ENCODE measurements at regions of chr15 and their contacts with region 1.

Region 1: GRCh38 chr15:41230650-41231533 is at the starts of genes CHP1 and EXD1:
- DNase-seq: peak; percentile 97
- H3K4me3 ChIP-seq: peak within 1 kb of the TSS; percentile 93 to 98 (median 93)
- H3K27ac ChIP-seq: peak within 1 kb of the TSS; percentile 89
- H3K4me1 ChIP-seq: peaks cover 25% of the 10 kb centered on the region
- H3K27me3 ChIP-seq: no peaks in the 10 kb centered on the region
- CTCF ChIP-seq: peak; percentile 82 to 93
- total RNA-seq, gene CHP1: 132 to 138 TPM
- total RNA-seq, gene EXD1: not detected

Region 2: DNA sequence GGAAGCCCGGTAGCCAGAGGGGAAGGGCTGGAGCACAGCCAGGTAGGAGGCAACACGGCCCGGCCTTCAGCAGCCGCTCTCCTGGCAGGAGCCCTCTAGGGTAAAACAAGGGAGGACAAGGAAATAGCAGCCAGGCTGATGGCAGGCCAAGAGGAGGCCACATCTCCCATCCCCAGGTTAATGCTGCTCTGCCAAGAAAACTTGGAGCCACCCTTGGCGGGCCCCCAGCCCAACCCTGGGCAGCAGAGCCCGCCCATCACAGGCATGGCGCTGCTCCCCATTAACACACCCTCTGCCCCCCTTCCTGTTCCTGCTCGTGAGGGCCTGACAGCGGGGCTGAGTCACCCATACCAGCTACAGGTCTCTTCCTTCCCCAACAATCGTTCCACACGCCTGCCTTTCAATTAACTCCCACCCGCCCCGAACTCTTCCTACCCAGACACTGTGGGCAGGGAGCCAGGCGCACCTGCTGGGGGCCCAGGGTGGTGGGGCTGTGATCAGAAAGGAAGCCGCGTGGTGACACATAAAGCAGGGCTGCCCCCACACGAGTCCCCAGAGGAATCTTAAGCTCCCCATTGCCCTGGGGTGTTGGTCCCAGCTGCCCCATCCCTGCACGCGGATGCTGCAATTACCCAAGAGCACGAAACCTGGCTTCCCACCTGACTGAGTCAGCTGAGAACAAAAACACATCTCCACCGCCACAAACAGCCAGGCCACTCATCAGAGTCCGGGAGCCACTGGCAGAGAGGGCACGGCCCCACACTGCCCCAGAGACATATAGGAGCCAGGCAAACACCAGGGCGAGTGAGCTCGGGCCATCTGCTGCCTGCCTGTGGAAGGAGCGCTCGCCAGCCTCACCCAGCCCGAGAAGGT is 461.4 kb before region 1 on chr15 and contains the start of gene C15orf62:
- CTCF ChIA-PET with region 1: no interaction called
- dilution Hi-C with region 1: no loop called
- in situ Hi-C with region 1: no loop called
- intact Hi-C with region 1: no loop called
- DNase-seq: peak; percentile 94
- H3K4me3 ChIP-seq: peak within 1 kb of the TSS in 1 of 3 experiments; percentile 34
- H3K27ac ChIP-seq: peak within 1 kb of the TSS; percentile 68
- H3K4me1 ChIP-seq: peaks cover 41% of the 10 kb centered on the region
- H3K27me3 ChIP-seq: no peaks in the 10 kb centered on the region
- CTCF ChIP-seq: no peak
- total RNA-seq, gene C15orf62: 0.21 TPM in 1 of 2 donors, not detected in the other

Region 3: DNA sequence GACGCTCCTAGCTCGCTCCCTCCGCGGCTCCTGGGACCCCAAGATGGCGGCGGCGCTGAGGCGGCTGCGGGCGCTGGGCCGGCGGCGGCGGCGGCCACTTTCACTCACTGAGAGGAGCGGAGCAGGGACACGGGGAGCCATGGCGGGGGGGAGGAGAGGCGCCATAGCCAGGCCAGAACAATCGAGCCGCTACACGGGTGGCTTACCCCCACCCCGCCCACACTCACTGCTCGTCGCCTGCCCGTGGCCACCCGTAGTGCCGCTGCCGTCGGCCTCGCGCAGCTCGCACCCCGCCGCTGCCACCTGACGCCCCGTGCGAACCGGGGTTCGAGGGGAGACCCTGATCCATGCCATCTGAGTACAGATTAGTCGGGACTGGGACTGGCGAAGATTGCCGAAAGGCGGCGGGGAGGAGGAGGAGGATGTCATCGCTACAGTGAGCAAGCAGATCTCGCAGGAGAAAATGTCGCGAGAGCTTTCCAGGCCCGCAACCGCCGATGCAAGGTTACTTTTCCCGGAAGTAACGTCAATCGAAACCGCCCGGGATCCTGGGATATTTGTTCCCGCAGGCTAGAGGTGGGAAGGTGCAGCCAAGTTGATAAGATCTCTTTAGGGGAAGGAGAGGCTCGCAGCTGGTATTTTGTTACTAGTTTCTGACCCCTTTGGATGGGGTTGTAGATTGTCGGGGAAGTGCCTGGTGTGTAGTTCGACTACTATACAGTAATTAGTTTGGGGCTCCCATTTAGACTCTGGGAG is 114.6 kb before region 1 on chr15 and contains the start of gene INO80:
- CTCF ChIA-PET with region 1: no interaction called
- dilution Hi-C with region 1: no loop called
- in situ Hi-C with region 1: no loop called
- intact Hi-C with region 1: loop called (anchors 5 kb)
- DNase-seq: peak; percentile 98
- H3K4me3 ChIP-seq: peak within 1 kb of the TSS; percentile 84 to 92 (median 89)
- H3K27ac ChIP-seq: peak within 1 kb of the TSS; percentile 100
- H3K4me1 ChIP-seq: peaks cover 9% of the 10 kb centered on the region
- H3K27me3 ChIP-seq: no peaks in the 10 kb centered on the region
- CTCF ChIP-seq: no peak
- total RNA-seq, gene INO80: 14.0 to 28.0 TPM

Region 4: DNA sequence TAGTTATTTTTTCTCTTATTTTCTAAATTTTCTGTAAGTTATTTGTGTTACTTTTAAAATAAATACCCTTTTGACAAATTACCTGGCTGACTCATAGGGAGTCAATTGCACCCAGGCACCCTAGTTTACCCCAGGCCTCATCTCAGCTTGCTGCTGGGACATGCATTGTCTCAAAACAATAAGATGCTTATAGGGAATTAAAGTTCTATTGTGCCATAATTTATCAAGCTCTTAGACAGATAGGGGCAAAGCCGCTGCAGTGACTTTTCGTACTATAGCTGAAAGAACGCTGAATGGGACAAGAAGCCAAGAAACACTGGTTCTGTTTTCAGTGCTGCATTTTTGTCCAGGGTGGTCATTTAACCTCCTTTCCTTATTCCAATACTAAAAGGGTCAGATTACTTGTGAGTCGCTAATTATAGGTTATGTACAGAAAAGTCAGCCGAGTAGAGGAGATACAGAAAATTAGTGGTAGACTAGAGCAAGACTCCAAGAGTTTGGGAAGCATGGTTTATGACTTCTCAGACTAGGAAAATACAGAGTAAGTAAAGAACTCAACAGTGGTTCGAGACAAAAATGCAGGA is 50.6 kb before region 1 on chr15:
- CTCF ChIA-PET with region 1: no interaction called
- dilution Hi-C with region 1: no loop called
- in situ Hi-C with region 1: no loop called
- intact Hi-C with region 1: no loop called
- DNase-seq: no peak
- H3K4me3 ChIP-seq: no peak overlapping the region
- H3K27ac ChIP-seq: no peak overlapping the region
- H3K4me1 ChIP-seq: no peaks in the 10 kb centered on the region
- H3K27me3 ChIP-seq: no peaks in the 10 kb centered on the region
- CTCF ChIP-seq: no peak

Region 5: DNA sequence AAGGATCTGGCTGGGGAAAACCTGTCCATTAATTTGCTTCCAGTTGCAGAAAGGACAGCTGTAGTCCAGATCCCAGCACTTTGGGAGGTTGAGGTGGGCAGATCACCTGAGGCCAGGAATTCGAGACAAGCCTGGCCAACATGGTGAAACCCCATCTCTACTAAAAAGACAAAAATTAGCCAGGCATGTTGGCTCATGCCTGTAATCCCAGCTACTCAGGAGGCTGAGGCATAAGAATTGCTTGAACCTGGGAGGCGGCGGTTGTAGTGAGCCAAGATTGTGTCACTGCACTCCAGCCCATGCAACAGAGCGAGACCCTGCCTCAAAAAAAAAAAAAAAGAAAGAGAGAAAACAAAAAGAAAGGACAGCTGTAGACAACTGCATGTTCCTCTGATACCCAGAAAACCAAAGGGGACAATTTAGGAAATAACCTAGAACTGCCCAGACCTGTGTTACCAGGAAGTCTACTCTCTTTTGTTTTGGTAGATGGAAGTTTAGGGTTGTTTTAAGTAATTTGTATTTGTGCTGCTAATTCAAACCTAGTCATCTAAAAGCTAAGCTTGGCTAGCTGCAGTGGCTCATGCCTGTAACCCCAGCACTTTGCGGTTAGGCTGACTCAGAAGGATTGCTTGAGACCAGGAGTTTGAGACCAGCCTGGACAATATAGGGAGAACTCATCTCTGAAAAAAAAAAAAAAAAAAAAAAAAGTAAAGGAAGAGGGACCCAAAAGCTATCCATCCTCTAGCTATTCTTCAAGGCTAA is 23.0 kb before region 1 on chr15:
- CTCF ChIA-PET with region 1: interaction called, 3 read pairs
- dilution Hi-C with region 1: no loop called
- in situ Hi-C with region 1: no loop called
- intact Hi-C with region 1: loop called (anchors 1 kb)
- DNase-seq: peak; percentile 90
- H3K4me3 ChIP-seq: peak overlapping the region in 2 of 3 experiments; percentile 24 to 32
- H3K27ac ChIP-seq: peak overlapping the region; percentile 90
- H3K4me1 ChIP-seq: peaks cover 16% of the 10 kb centered on the region
- H3K27me3 ChIP-seq: no peaks in the 10 kb centered on the region
- CTCF ChIP-seq: no peak

Region 6: GRCh38 chr15:41254560-41254959 is 23.7 kb after region 1 on chr15:
- CTCF ChIA-PET with region 1: interaction called, 5 read pairs
- dilution Hi-C with region 1: no loop called
- in situ Hi-C with region 1: no loop called
- intact Hi-C with region 1: loop called (anchors 1 kb)
- DNase-seq: no peak
- H3K4me3 ChIP-seq: no peak overlapping the region
- H3K27ac ChIP-seq: no peak overlapping the region
- H3K4me1 ChIP-seq: peaks cover 20% of the 10 kb centered on the region
- H3K27me3 ChIP-seq: no peaks in the 10 kb centered on the region
- CTCF ChIP-seq: no peak

Region 7: DNA sequence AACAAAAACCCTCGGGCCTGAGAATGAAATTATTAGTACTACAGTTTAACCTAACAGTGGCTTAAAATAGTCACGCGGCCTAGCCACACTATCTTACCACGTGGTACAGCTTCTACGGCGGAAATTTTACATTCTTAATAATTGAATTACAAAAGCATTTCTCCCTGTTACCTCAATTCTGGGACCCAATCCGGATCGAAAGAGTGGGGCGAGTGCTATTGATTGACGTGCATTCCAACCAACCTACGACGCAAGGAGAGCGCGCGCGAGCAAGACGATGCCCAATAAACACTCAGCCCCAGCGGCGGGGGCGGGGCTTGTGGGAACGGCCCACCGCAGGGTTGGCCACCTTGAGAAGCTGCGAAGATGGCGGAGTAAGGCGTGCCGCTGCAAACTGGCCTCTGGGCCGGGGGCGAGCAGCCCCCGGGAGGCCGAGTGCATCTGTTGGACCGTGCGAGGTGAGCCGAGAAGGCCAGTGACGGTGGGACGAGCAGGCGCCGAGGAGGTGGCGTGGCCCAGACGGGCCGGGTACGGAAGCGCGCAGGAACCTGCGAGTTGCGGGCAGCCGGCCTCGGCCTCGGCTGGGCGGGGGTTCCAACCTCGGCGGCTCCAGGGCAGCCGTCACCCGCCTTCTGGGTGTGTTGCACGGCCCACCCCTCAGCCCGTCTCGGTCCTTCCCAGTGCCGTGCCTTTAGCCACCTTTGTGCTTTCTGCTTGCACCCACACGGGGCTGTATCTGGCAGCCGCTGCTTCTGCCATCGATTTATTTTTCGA is 52.9 kb after region 1 on chr15:
- CTCF ChIA-PET with region 1: no interaction called
- dilution Hi-C with region 1: no loop called
- in situ Hi-C with region 1: no loop called
- intact Hi-C with region 1: loop called (anchors 1 kb)
- DNase-seq: peak; percentile 98
- H3K4me3 ChIP-seq: peak overlapping the region; percentile 71 to 98 (median 92)
- H3K27ac ChIP-seq: peak overlapping the region; percentile 77
- H3K4me1 ChIP-seq: peaks cover 11% of the 10 kb centered on the region
- H3K27me3 ChIP-seq: no peaks in the 10 kb centered on the region
- CTCF ChIP-seq: no peak

Region 8: DNA sequence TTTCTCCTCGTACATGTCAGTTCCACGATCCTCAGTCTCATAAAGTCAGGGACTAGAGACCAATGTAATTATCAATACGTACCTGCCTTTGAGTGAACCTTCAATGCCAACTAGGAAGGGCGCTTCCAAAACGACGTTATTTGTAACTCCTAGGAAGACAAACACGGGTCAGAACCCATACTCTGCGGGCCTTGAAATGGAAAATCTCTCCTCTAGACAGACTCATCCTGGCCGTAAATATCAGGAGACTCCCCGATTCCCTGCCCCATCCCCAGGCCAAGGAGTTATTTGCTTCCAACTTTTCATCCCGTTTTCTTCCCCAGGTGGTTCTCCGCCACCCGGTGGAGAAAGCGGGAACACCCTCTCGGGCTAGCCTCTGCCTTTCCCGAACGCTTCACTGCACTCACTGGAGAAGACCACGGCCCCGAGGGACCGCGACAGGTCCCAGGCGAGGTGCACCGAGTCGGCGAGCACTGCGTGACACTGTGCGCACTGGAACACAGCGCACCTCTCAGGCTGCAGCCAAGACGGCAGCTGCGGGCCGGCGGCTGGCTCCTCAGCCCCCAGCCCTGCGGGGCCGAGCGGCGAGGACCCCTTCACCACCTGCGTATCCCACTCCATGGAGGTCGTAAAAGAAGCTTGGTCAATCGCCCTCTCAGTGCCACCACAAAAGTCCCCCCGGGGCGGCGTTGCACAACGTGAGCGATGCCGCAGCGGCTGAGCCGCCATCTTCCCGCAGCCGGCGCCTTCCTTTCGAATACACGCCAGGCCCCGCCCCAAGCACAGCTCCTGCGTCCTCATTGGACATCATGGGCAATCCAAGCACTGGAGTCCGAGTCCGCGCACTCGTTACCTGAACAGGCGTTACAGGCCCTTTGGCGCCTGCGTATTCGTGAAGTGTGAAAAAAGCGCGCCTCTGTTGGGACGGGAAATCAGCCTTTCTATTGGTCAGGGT is 101.2 kb after region 1 on chr15 and contains the start of gene OIP5:
- CTCF ChIA-PET with region 1: no interaction called
- dilution Hi-C with region 1: no loop called
- in situ Hi-C with region 1: no loop called
- intact Hi-C with region 1: loop called (anchors 1 kb)
- DNase-seq: peak; percentile 100
- H3K4me3 ChIP-seq: peak within 1 kb of the TSS; percentile 59 to 100 (median 74)
- H3K27ac ChIP-seq: peak within 1 kb of the TSS; percentile 85
- H3K4me1 ChIP-seq: peaks cover 14% of the 10 kb centered on the region
- H3K27me3 ChIP-seq: no peaks in the 10 kb centered on the region
- CTCF ChIP-seq: peak; percentile 73 to 84
- total RNA-seq, gene OIP5: 1.3 to 8.0 TPM

Measured in mammary epithelial cell (primary cell).